ENCODE measurements at regions of chr4 and their contacts with region 1.

Region 1: DNA sequence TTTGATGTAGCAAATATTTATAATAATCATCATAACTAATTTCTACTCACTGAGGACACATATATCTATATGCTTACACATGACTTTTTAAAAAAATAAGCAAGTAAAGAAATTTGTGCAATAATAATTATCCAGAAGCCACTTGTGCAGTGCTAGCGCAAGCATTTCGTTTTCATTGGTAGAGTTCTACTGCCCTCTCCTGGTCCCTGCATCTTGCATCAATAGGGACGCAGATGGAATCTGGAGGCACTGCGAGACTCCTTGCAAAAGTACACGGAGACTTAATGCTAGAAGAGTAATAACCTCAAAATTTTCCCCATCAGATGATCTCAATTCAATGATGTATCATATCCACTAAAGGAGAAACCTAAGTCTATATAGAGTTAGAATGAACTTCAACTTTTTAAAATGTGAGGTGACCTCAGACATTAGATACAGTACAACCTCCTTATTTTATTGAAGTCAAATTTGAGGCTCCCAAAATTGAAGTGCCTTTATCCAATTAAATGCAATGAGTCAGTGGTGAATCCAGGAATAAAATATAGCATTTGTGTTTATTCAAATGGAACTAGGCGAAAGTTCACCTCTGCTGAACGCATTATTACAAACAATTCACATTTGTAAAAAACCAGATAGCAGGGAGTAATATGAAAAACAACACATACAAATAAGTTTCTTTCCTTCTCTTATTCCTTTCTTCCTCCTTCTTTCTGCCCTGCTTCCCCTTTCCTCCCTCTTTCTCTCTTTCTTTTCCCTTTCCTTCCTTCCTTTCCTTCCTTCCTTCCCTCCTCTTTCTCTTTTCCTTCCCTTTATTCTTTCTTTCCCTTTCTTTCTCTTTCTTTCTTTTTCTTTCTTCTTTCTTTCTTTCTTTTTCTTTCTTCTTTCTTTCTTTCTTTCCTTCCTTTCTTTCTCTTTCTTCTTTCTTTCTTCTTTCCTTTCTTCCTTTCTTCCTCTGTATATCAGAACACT is 450.0 kb downstream of the ANKRD50 start:
- DNase-seq: peak; percentile 58
- ATAC-seq: peak; percentile 93
- H3K4me3 ChIP-seq: no peak overlapping the region
- H3K27ac ChIP-seq: peak overlapping the region; percentile 44; the same call in 1 of the 2 replicates
- H3K4me1 ChIP-seq: no peaks in the 10 kb centered on the region; the same call in 1 of the 2 replicates
- H3K27me3 ChIP-seq: no peaks in the 10 kb centered on the region
- CTCF ChIP-seq: peak; percentile 80

Region 2: GRCh38 chr4:123102897-123103471 is 1159.5 kb before region 1 on chr4:
- CTCF ChIA-PET with region 1: no interaction called
- POLR2A ChIA-PET with region 1: no interaction called
- in situ Hi-C with region 1: no loop called
- intact Hi-C with region 1: loop called (anchors 10 kb)
- DNase-seq: no peak
- ATAC-seq: peak; percentile 83
- H3K4me3 ChIP-seq: no peak overlapping the region
- H3K27ac ChIP-seq: peak overlapping the region; percentile 72; the same call in 1 of the 2 replicates
- H3K4me1 ChIP-seq: no peaks in the 10 kb centered on the region; the same call in 1 of the 2 replicates
- H3K27me3 ChIP-seq: no peaks in the 10 kb centered on the region
- CTCF ChIP-seq: peak; percentile 57; the same call in 1 of the 2 replicates

Region 3: DNA sequence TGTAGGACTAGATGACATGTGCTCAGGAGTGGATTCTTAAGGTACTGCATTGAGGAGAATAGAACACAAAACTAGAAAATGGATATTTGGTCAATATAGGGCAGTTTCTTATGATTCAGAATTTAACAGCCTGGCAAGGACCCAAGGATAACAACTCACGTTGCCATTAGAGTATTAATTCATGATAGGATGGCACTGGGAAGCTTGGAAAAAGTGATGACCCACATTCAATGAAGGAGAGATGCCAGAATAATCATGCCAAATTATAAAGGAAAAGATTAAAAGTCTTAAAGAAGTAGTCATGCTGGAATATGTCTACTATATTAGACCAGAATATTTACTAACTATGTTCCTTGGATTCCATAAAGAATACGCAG is 144.4 kb before region 1 on chr4:
- CTCF ChIA-PET with region 1: no interaction called
- POLR2A ChIA-PET with region 1: no interaction called
- in situ Hi-C with region 1: no loop called
- intact Hi-C with region 1: loop called (anchors 5 kb)
- DNase-seq: no peak
- ATAC-seq: no peak
- H3K4me3 ChIP-seq: no peak overlapping the region
- H3K27ac ChIP-seq: no peak overlapping the region
- H3K4me1 ChIP-seq: no peaks in the 10 kb centered on the region; the same call in 1 of the 2 replicates
- H3K27me3 ChIP-seq: no peaks in the 10 kb centered on the region
- CTCF ChIP-seq: no peak

Region 4: GRCh38 chr4:124322234-124323065 is 60.0 kb after region 1 on chr4:
- CTCF ChIA-PET with region 1: no interaction called
- POLR2A ChIA-PET with region 1: no interaction called
- in situ Hi-C with region 1: no loop called
- intact Hi-C with region 1: loop called (anchors 5 kb)
- DNase-seq: peak; percentile 17
- ATAC-seq: no peak
- H3K4me3 ChIP-seq: no peak overlapping the region
- H3K27ac ChIP-seq: no peak overlapping the region
- H3K4me1 ChIP-seq: no peaks in the 10 kb centered on the region; the same call in 1 of the 2 replicates
- H3K27me3 ChIP-seq: no peaks in the 10 kb centered on the region
- CTCF ChIP-seq: peak; percentile 46; the same call in 1 of the 2 replicates

Measured in Panc1 (cell line).